ENCODE measurements at regions of chr6 and their contacts with region 1.

Region 1: GRCh38 chr6:122520179-122520578 is 48.6 kb upstream of the SERINC1 start:
- DNase-seq: no peak
- H3K4me3 ChIP-seq: no peak overlapping the region
- H3K27ac ChIP-seq: no peak overlapping the region
- H3K4me1 ChIP-seq: no peaks in the 10 kb centered on the region
- H3K27me3 ChIP-seq: 0 out of 2 replicates have a peak, but pooled peaks cover 2% of the 10 kb centered on the region

Region 2: GRCh38 chr6:122381497-122382265 is 138.5 kb before region 1 on chr6:
- in situ Hi-C with region 1: loop called (anchors 10 kb)
- DNase-seq: peak; percentile 84
- H3K4me3 ChIP-seq: no peak overlapping the region
- H3K27ac ChIP-seq: no peak overlapping the region
- H3K4me1 ChIP-seq: no peaks in the 10 kb centered on the region
- H3K27me3 ChIP-seq: no peaks in the 10 kb centered on the region